ENCODE measurements at regions of chr1 and their contacts with region 1.

Region 1: GRCh38 chr1:36285448-36286101 is 20.6 kb upstream of the SH3D21 start:
- DNase-seq: peak; percentile 89
- ATAC-seq: peak; percentile 89
- H3K4me3 ChIP-seq: no peak overlapping the region
- H3K27ac ChIP-seq: no peak overlapping the region
- H3K4me1 ChIP-seq: no peaks in the 10 kb centered on the region
- H3K27me3 ChIP-seq: no peaks in the 10 kb centered on the region
- CTCF ChIP-seq: peak; percentile 90

Region 2: DNA sequence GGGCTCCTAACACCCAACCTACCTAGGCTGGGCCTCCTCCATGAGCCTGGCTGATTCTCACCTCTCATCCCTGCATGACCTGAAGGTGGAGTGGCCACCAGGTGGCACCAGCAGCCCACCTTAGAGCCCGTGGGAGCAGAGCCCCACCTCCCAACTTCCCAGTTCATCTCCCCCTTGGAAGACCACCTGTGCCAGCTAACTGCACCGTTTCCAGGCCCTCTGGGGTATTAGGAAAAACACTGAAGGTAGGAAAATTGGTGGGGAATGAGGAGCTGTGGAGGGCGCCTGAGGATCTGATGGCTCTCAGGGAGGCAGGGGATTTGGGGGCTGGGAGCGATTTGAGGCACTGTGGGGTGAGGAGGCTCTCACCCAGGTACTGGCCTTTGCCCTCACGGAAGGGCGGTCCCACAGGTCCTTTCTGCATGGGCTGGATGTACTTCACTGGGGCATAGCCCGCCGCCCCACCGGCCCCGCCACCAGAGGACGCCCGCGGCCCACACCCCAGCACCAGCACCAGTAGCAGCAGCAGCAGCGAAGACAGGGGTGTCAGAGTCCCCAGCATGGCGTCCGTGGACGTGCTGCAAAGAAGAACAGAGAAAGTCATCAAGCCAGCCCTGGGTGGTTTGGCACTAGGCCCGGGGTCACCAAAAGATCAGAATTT is 185.8 kb before region 1 on chr1:
- CTCF ChIA-PET with region 1: no interaction called
- POLR2A ChIA-PET with region 1: no interaction called
- intact Hi-C with region 1: loop called (anchors 5 kb)
- DNase-seq: peak; percentile 85
- ATAC-seq: peak; percentile 90
- H3K4me3 ChIP-seq: no peak overlapping the region
- H3K27ac ChIP-seq: no peak overlapping the region
- H3K4me1 ChIP-seq: no peaks in the 10 kb centered on the region
- H3K27me3 ChIP-seq: no peaks in the 10 kb centered on the region
- CTCF ChIP-seq: peak; percentile 95

Region 3: DNA sequence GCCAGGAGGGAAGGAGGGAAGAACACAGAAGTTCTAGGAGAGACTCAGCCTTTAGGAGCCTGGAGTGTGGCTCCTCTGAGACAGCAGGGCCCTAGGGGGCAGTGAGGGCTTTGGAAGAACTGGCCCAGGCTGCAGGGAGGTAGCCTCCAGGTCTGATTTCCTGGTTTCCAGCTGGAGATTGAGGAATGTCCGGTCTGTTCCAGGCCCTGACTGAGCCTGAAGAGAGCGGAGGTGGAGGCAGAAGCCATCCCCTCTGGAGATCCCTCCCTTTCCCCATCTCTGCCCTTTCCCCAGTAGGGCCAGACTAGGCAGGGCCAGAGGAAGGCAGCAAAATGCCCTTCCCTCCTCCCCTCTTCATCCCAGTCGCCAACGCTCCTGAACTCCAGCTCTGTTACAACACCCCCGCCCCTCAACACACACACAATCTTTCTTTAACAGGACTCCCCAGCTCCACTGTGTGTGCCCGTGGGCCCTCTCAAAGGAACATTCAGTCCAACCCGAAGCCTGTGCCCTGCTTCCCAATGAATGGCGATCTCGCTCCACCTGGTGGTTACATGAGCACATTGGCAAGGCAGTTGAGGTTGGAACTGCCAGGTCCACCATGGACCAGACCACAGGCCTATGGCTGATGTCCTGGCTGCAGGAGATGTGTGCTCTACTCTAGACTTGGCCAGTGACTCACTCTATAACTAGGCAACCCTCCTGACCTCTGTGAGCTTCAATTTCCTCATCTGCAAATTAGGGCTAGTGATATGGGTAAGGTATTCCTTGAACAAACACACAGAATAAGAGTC is 97.6 kb before region 1 on chr1:
- CTCF ChIA-PET with region 1: interaction called, 5 read pairs
- POLR2A ChIA-PET with region 1: no interaction called
- intact Hi-C with region 1: loop called (anchors 1 kb)
- DNase-seq: peak; percentile 91
- ATAC-seq: peak; percentile 97
- H3K4me3 ChIP-seq: no peak overlapping the region
- H3K27ac ChIP-seq: peak overlapping the region; percentile 36
- H3K4me1 ChIP-seq: peaks cover 7% of the 10 kb centered on the region; the same call in 1 of the 2 replicates
- H3K27me3 ChIP-seq: no peaks in the 10 kb centered on the region
- CTCF ChIP-seq: peak; percentile 94

Region 4: GRCh38 chr1:36223993-36224536 is 61.5 kb before region 1 on chr1 and contains the start of gene THRAP3:
- CTCF ChIA-PET with region 1: interaction called, 9 read pairs
- POLR2A ChIA-PET with region 1: no interaction called
- intact Hi-C with region 1: loop called (anchors 2 kb)
- DNase-seq: peak; percentile 99
- ATAC-seq: peak; percentile 96
- H3K4me3 ChIP-seq: peak within 1 kb of the TSS; percentile 100
- H3K27ac ChIP-seq: peak within 1 kb of the TSS; percentile 93
- H3K4me1 ChIP-seq: peaks cover 15% of the 10 kb centered on the region
- H3K27me3 ChIP-seq: no peaks in the 10 kb centered on the region
- CTCF ChIP-seq: no peak
- total RNA-seq, gene THRAP3: 55.7 and 67.0 TPM in 2 replicates

Region 5: GRCh38 chr1:36239941-36240637 is 45.5 kb before region 1 on chr1:
- CTCF ChIA-PET with region 1: no interaction called
- POLR2A ChIA-PET with region 1: no interaction called
- intact Hi-C with region 1: loop called (anchors 5 kb)
- DNase-seq: no peak
- ATAC-seq: no peak
- H3K4me3 ChIP-seq: no peak overlapping the region
- H3K27ac ChIP-seq: no peak overlapping the region
- H3K4me1 ChIP-seq: no peaks in the 10 kb centered on the region
- H3K27me3 ChIP-seq: no peaks in the 10 kb centered on the region
- CTCF ChIP-seq: no peak

Measured in PC-3 (cell line).